MCF 10A (cell line): ENCODE measurements at regions of chr12 and their contacts with region 1.

Region 1: DNA sequence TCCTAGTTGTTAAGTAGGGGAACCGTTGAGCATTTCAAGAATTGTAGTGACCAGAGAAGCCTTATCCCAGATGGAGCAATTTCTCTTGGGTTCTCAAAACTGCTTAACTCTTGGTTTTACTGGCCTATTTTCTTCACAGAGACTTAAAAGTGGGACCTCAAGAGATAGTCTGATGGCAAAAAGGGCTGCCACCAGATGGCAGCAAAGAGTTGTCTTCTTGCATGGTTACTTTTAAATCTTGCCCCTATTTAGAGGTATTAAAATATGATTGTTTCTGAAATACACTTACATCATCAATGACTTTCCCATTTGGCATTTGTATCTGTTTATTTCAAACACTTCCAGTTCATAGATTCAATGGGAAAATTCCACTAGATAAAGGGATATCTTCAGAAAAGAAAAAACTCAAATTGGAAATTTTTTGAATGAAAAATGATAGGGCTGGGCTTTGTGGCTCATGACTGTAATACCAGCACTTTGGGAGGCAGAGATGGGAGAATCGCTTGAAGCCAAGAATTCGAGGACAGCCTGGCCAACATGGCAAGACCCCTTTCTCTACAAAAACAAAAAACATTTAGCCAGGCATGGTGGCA is 69.9 kb upstream of the CNTN1 start:
- DNase-seq: peak; percentile 62
- H3K4me3 Mint-ChIP-seq: no peak overlapping the region
- H3K27ac Mint-ChIP-seq: no peak overlapping the region
- H3K4me1 Mint-ChIP-seq: no peaks in the 10 kb centered on the region
- H3K27me3 Mint-ChIP-seq: peaks cover 17% of the 10 kb centered on the region
- CTCF ChIP-seq: peak; percentile 71

Region 2: GRCh38 chr12:39831587-39832308 is 790.6 kb before region 1 on chr12:
- CTCF ChIA-PET with region 1: no interaction called
- POLR2A ChIA-PET with region 1: no interaction called
- intact Hi-C with region 1: no loop called
- DNase-seq: no peak
- H3K4me3 Mint-ChIP-seq: no peak overlapping the region
- H3K27ac Mint-ChIP-seq: no peak overlapping the region
- H3K4me1 Mint-ChIP-seq: no peaks in the 10 kb centered on the region
- H3K27me3 Mint-ChIP-seq: no peaks in the 10 kb centered on the region
- CTCF ChIP-seq: no peak

Region 3: GRCh38 chr12:40632933-40633332 is 10.6 kb after region 1 on chr12:
- CTCF ChIA-PET with region 1: interaction called, 10 read pairs
- POLR2A ChIA-PET with region 1: no interaction called
- intact Hi-C with region 1: no loop called
- DNase-seq: peak; percentile 4
- H3K4me3 Mint-ChIP-seq: no peak overlapping the region
- H3K27ac Mint-ChIP-seq: no peak overlapping the region
- H3K4me1 Mint-ChIP-seq: peaks cover 4% of the 10 kb centered on the region
- H3K27me3 Mint-ChIP-seq: peaks cover 19% of the 10 kb centered on the region
- CTCF ChIP-seq: no peak